ENCODE measurements at regions of chr10 and their contacts with region 1.

Region 1: DNA sequence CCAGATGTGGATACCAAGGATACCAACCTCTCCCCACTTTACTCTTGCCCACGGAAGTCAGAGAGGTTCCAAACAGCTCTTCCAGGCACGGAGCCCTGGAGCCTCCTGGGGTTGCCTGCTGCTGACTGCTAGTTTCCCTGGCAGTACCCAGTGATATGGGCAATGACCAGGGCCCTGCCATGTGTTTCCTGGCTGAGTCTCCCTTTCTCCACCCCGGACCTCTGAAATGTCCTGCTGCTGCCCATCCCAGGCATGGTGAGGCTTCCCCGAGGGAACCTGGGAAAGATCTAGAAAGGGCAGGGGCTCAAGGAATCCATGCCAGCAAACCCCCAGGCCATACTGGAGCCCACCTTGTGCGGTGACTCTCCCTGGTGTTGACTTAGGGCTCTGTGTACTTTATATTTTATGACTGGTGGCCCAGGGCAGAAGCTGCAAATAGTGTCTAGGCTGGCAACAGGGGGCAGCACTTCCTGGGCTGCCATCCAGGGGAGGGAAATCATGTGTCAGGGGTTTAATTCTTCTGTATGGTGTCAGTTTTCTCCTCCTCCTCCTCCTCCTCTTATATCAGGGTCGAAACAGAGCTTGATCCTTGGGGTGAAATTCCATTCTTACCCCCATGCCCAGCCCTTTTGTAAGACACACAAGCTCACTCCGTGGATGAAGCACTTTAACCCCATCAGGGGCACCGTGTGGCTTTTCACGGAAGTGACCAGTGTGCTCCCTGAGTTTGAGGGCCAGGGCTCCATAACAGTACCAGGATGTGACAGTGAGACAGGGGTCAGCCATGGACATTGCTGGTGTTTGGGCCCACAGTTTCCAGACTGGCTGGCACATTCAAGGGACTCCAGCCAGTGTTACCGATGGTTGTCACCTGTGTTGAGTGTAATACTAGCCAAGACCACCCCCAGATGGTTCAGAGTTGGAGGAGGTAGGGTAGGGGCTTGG is 62.4 kb upstream of the GDF10 start:
- DNase-seq: no peak

Region 2: GRCh38 chr10:47287365-47287802 is 49.8 kb after region 1 on chr10:
- intact Hi-C with region 1: loop called in 1 of 2 experiments (anchors 2 kb)
- DNase-seq: no peak

Measured in posterior vena cava (tissue), 2 donors.